CD14-positive monocyte (primary cell): ENCODE measurements at regions of chr15 and their contacts with region 1.

Region 1: DNA sequence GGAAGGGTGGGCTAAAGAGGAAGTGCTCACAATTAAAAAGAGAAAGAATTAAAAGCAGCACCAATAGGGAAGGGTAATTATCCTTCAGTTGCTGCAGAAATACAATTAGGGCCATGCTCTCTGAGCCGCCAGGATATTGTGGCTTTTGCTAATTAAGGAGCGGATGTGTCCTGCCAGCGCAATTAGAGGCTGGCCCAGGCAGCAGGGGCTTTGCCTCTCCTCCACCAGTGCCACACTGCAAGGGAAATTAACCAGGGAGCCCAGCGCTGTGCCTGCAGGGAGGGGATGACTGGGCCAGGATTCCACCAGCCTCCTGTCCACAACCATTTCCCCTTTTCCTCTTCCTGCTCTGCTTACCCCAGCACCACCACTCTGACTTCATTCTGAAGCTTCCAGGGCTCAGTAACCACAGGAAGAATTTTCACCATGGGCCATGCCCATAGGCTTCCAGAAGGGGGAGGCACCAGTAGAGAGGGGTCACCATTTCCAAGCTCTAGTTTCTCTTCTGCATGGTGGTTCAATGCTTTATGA is 10.4 kb upstream of the AEN start:
- DNase-seq: peak in 2 of 3 donors; percentile 30 to 69
- H3K4me3 ChIP-seq: no peak overlapping the region
- H3K4me3 Mint-ChIP-seq: no peak overlapping the region
- H3K27ac ChIP-seq: no peak overlapping the region
- H3K27ac Mint-ChIP-seq: peak overlapping the region in 1 of 7 donors; percentile 11
- H3K4me1 ChIP-seq: peaks cover 0 to 7% of the 10 kb centered on the region in 2 donors
- H3K4me1 Mint-ChIP-seq: peaks cover 19% of the 10 kb centered on the region
- H3K27me3 ChIP-seq: peaks cover 26 to 46% of the 10 kb centered on the region in 2 donors
- H3K27me3 Mint-ChIP-seq: peaks cover 21 to 34% (median 30%) of the 10 kb centered on the region in 3 donors
- CTCF ChIP-seq: peak; percentile 9

Region 2: GRCh38 chr15:88649753-88650551 is 39.2 kb after region 1 on chr15:
- intact Hi-C with region 1: loop called in 1 of 2 experiments (anchors 5 kb)
- DNase-seq: no peak
- H3K4me3 ChIP-seq: no peak overlapping the region
- H3K4me3 Mint-ChIP-seq: no peak overlapping the region
- H3K27ac ChIP-seq: no peak overlapping the region
- H3K27ac Mint-ChIP-seq: peak overlapping the region in 4 of 7 donors; percentile 52 to 78 (median 62)
- H3K4me1 ChIP-seq: no peaks in the 10 kb centered on the region
- H3K4me1 Mint-ChIP-seq: peaks cover 3% of the 10 kb centered on the region
- H3K27me3 ChIP-seq: no peaks in the 10 kb centered on the region
- H3K27me3 Mint-ChIP-seq: peaks cover 0 to 2% (median 1%) of the 10 kb centered on the region in 3 donors
- CTCF ChIP-seq: no peak